Naive thymus-derived CD4-positive, alpha-beta T cell (primary cell): ENCODE measurements at regions of chr4 and their contacts with region 1.

Region 1: DNA sequence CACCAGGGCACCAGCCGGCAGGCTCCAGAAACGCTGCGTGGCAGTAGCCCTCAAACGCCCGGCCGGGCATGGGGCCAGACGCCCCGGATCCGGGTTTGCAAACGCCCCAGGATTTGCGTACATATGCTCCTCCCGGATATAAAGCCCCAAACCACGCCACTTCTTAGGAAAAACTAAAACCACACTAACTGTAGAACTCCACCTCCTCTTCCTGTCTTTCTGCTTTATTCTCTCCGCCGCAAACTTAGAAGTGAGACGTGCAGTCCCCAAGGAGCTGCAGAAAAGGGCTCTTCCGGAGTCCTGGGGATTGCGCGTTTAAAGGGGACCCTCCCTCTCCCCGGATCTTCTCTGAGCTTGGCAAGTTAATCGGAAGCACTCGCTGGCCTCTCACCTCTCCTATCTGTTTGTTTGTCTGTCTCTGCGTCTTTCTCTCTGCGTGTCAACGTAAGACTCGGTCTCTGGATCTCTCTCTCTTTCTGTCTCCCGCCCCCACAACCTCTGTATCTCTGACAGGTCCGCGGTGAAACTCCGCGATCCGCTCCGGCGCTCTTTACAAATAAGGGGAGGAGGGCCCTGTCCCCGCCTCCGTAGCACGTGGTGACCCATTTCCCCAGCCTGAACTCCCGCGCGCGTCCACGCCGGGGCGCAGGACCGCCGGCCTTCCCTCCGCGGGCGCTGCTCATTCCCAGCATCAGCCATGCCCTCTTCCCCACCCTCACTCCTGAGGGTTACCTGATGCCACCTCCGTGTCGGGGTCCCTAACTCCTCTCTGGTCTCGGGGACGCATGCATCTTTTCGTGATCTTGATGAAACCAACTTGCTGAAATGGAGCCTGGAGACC is at the start of gene SLC39A8:
- DNase-seq: peak; percentile 75 to 91 (median 89)
- ATAC-seq: peak; percentile 87
- H3K4me3 ChIP-seq: peak within 1 kb of the TSS; percentile 87
- H3K4me3 Mint-ChIP-seq: peak within 1 kb of the TSS; percentile 87 to 97 (median 90)
- H3K27ac ChIP-seq: peak within 1 kb of the TSS; percentile 95
- H3K27ac Mint-ChIP-seq: peak within 1 kb of the TSS; percentile 91 to 98 (median 95)
- H3K4me1 ChIP-seq: peaks cover 15 to 37% of the 10 kb centered on the region in 2 donors
- H3K4me1 Mint-ChIP-seq: peaks cover 24 to 51% (median 46%) of the 10 kb centered on the region in 7 donors
- H3K27me3 ChIP-seq: no peaks in the 10 kb centered on the region
- H3K27me3 Mint-ChIP-seq: peaks cover 0 to 7% (median 0%) of the 10 kb centered on the region in 5 donors
- total RNA-seq, gene SLC39A8: 15.1 to 99.5 (median 17.8) TPM

Region 2: GRCh38 chr4:101020956-101021355 is 1324.2 kb before region 1 on chr4:
- CTCF ChIA-PET with region 1: no interaction called
- POLR2A ChIA-PET with region 1: no interaction called
- intact Hi-C with region 1: loop called in 1 of 2 experiments (anchors 2 kb)
- DNase-seq: peak in 3 of 9 donors; percentile 3 to 10 (median 10)
- ATAC-seq: peak; percentile 82
- H3K4me3 ChIP-seq: peak overlapping the region; percentile 21
- H3K4me3 Mint-ChIP-seq: peak overlapping the region in 4 of 10 donors; percentile 3 to 76 (median 46)
- H3K27ac ChIP-seq: no peak overlapping the region
- H3K27ac Mint-ChIP-seq: peak overlapping the region; percentile 8 to 90 (median 59)
- H3K4me1 ChIP-seq: peaks cover 0 to 48% of the 10 kb centered on the region in 2 donors
- H3K4me1 Mint-ChIP-seq: peaks cover 21 to 55% (median 34%) of the 10 kb centered on the region in 7 donors
- H3K27me3 ChIP-seq: no peaks in the 10 kb centered on the region
- H3K27me3 Mint-ChIP-seq: no peaks in the 10 kb centered on the region

Region 3: DNA sequence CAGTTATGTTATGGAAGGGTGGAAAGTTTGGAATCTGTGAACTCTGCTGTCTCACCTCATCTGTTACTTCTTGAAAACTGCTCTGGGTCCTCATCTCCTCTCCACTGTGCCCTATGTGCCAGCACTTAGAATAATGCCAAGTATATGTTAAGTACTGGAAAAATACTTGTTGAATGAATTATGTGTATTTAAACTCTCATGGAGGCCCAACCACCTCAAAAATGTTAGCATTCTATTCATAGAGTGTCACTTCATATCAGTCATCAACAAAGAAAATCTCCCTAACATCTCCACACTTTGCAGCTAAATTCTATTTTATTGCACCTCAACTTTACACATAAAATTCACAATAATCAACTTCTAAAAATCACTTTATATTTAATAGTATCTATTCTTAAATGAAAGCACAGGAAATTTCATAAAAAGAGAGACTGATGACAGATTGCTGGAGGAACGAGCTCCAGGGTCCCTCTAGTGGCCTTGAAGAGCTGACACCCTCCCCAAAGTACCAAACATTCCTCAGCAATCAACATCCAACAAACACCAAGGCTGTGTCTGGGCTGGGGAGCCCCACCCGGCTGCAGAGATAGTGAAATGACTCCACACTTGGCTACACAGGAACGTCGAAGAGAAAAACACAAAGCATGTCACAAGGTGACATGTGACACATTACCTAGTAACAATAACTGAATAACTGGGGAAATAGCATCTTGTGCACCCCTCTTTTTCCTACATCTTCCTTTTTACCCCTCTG is 45.6 kb before region 1 on chr4:
- CTCF ChIA-PET with region 1: no interaction called
- POLR2A ChIA-PET with region 1: no interaction called
- intact Hi-C with region 1: loop called (anchors 2 to 5 kb)
- DNase-seq: peak in 6 of 9 donors; percentile 12 to 32 (median 26)
- ATAC-seq: peak; percentile 74
- H3K4me3 ChIP-seq: no peak overlapping the region
- H3K4me3 Mint-ChIP-seq: no peak overlapping the region
- H3K27ac ChIP-seq: no peak overlapping the region
- H3K27ac Mint-ChIP-seq: no peak overlapping the region
- H3K4me1 ChIP-seq: no peaks in the 10 kb centered on the region
- H3K4me1 Mint-ChIP-seq: peaks cover 0 to 8% (median 4%) of the 10 kb centered on the region in 7 donors
- H3K27me3 ChIP-seq: no peaks in the 10 kb centered on the region
- H3K27me3 Mint-ChIP-seq: no peaks in the 10 kb centered on the region

Region 4: GRCh38 chr4:102318549-102318948 is 26.6 kb before region 1 on chr4:
- CTCF ChIA-PET with region 1: no interaction called
- POLR2A ChIA-PET with region 1: no interaction called
- intact Hi-C with region 1: no loop called
- DNase-seq: no peak
- ATAC-seq: no peak
- H3K4me3 ChIP-seq: no peak overlapping the region
- H3K4me3 Mint-ChIP-seq: no peak overlapping the region
- H3K27ac ChIP-seq: no peak overlapping the region
- H3K27ac Mint-ChIP-seq: no peak overlapping the region
- H3K4me1 ChIP-seq: no peaks in the 10 kb centered on the region
- H3K4me1 Mint-ChIP-seq: peaks cover 29 to 50% (median 43%) of the 10 kb centered on the region in 7 donors
- H3K27me3 ChIP-seq: no peaks in the 10 kb centered on the region
- H3K27me3 Mint-ChIP-seq: no peaks in the 10 kb centered on the region

Region 5: GRCh38 chr4:102610007-102610406 is 264.8 kb after region 1 on chr4:
- CTCF ChIA-PET with region 1: no interaction called
- POLR2A ChIA-PET with region 1: interaction called, 4 read pairs
- intact Hi-C with region 1: loop called (anchors 2 to 5 kb)
- DNase-seq: no peak
- ATAC-seq: no peak
- H3K4me3 ChIP-seq: no peak overlapping the region
- H3K4me3 Mint-ChIP-seq: peak overlapping the region in 1 of 10 donors; percentile 5
- H3K27ac ChIP-seq: no peak overlapping the region
- H3K27ac Mint-ChIP-seq: peak overlapping the region; percentile 10 to 97 (median 76)
- H3K4me1 ChIP-seq: peaks cover 38% of the 10 kb centered on the region in 2 donors
- H3K4me1 Mint-ChIP-seq: peaks cover 30 to 85% (median 67%) of the 10 kb centered on the region in 7 donors
- H3K27me3 ChIP-seq: no peaks in the 10 kb centered on the region
- H3K27me3 Mint-ChIP-seq: no peaks in the 10 kb centered on the region

Region 6: DNA sequence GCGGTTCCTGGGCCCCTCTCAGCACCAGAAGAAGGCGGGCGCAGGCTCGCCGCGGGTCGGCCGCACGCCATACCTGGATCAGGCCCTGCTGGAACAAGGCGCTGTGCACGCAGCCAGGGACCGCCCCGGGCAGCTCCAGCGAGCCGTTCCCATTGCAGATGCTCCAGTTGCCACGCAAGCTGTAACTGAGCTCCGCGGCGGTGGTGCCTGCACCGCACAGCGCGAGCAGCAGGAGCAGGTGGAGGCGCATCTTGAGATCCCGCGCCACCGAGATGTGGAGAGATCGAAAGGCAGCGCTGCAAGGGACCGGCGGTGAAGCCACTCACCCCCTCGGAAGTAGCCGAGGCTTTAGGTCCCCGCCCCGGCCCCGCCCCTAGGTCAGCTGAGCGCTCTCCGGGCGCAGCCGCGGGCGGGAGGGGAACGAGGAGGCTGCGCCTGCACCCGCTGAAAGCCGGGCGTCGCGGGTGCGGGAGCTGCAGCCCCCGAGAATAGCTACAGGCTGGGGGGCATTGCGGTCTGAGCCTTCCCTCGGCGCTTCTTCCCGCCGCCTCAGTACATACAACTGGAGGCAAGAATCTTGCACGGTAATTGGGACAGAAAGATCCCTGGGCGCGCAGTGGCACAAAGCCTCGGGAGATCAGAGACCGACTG is 415.6 kb after region 1 on chr4 and contains the start of gene MANBA:
- CTCF ChIA-PET with region 1: no interaction called
- POLR2A ChIA-PET with region 1: interaction called, 5 read pairs
- intact Hi-C with region 1: loop called (anchors 1 to 2 kb)
- DNase-seq: peak; percentile 62 to 81 (median 73)
- ATAC-seq: peak; percentile 91
- H3K4me3 ChIP-seq: peak within 1 kb of the TSS; percentile 62
- H3K4me3 Mint-ChIP-seq: peak within 1 kb of the TSS; percentile 86 to 99 (median 98)
- H3K27ac ChIP-seq: peak within 1 kb of the TSS; percentile 72
- H3K27ac Mint-ChIP-seq: peak within 1 kb of the TSS; percentile 56 to 92 (median 84)
- H3K4me1 ChIP-seq: peaks cover 4 to 16% of the 10 kb centered on the region in 2 donors
- H3K4me1 Mint-ChIP-seq: peaks cover 35 to 50% (median 42%) of the 10 kb centered on the region in 7 donors
- H3K27me3 ChIP-seq: no peaks in the 10 kb centered on the region
- H3K27me3 Mint-ChIP-seq: peaks cover 0 to 13% (median 0%) of the 10 kb centered on the region in 5 donors
- total RNA-seq, gene MANBA: 15.7 to 56.4 (median 29.7) TPM

Region 7: GRCh38 chr4:103019308-103020124 is 674.3 kb after region 1 on chr4 and contains the start of gene SLC9B1:
- CTCF ChIA-PET with region 1: no interaction called
- POLR2A ChIA-PET with region 1: interaction called, 3 read pairs
- intact Hi-C with region 1: loop called (anchors 1 kb)
- DNase-seq: peak; percentile 87 to 95 (median 92)
- ATAC-seq: peak; percentile 98
- H3K4me3 ChIP-seq: peak within 1 kb of the TSS; percentile 48
- H3K4me3 Mint-ChIP-seq: peak within 1 kb of the TSS; percentile 84 to 98 (median 93)
- H3K27ac ChIP-seq: peak within 1 kb of the TSS; percentile 80
- H3K27ac Mint-ChIP-seq: peak within 1 kb of the TSS in 6 of 9 donors; percentile 96 to 99 (median 98)
- H3K4me1 ChIP-seq: peaks cover 13 to 14% of the 10 kb centered on the region in 2 donors
- H3K4me1 Mint-ChIP-seq: peaks cover 0 to 29% (median 20%) of the 10 kb centered on the region in 7 donors
- H3K27me3 ChIP-seq: no peaks in the 10 kb centered on the region
- H3K27me3 Mint-ChIP-seq: no peaks in the 10 kb centered on the region
- total RNA-seq, gene SLC9B1: 1.4 to 7.2 (median 3.9) TPM

Region 8: DNA sequence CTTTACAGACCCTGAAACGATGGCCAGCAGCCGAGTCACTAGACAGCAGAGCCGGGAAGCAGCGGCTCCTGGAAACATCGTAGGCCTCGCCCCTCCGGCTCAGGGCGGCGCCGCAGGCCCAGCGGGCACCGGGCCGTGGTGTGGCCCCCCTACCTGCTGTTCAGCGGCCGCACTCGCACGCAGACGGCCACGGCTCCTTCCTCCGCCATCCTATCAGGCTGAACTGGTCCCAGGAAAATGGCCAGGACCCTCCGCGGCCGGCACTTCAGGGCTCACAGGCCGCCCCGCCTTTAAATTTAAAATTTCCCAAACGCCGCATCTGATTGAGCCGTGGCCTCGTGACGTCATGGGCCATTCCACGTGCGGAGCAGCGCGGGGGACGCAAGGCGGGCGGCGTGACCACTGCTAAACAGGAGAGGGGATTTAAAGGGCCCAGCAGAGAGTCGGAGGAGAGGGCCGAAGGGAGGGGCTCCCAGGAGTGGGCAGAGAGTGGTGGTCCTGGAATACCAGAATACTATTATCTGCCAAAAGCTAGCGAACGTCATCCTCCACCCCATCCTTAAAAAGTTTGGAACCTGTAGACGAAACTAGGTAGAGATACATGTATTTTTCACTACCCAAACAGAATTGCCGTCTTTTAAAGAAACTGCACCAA is 853.1 kb after region 1 on chr4 and contains the start of gene CENPE:
- CTCF ChIA-PET with region 1: no interaction called
- POLR2A ChIA-PET with region 1: no interaction called
- intact Hi-C with region 1: loop called (anchors 2 kb)
- DNase-seq: peak; percentile 77 to 90 (median 87)
- ATAC-seq: peak; percentile 93
- H3K4me3 ChIP-seq: peak within 1 kb of the TSS; percentile 95
- H3K4me3 Mint-ChIP-seq: peak within 1 kb of the TSS; percentile 81 to 99 (median 96)
- H3K27ac ChIP-seq: peak within 1 kb of the TSS; percentile 91
- H3K27ac Mint-ChIP-seq: peak within 1 kb of the TSS; percentile 87 to 100 (median 99)
- H3K4me1 ChIP-seq: peaks cover 0 to 6% of the 10 kb centered on the region in 2 donors
- H3K4me1 Mint-ChIP-seq: peaks cover 6 to 29% (median 10%) of the 10 kb centered on the region in 7 donors
- H3K27me3 ChIP-seq: no peaks in the 10 kb centered on the region
- H3K27me3 Mint-ChIP-seq: peaks cover 0 to 21% (median 7%) of the 10 kb centered on the region in 5 donors
- total RNA-seq, gene CENPE: 1.1 to 35.8 (median 1.5) TPM